CD8-positive, alpha-beta memory T cell (primary cell): ENCODE measurements at regions of chr1 and their contacts with region 1.

Region 1: GRCh38 chr1:226121587-226122400 is 59.3 kb downstream of the H3-3A start:
- DNase-seq: peak; percentile 70 to 85 (median 79)
- H3K4me3 ChIP-seq: peak overlapping the region; percentile 58
- H3K4me3 Mint-ChIP-seq: peak overlapping the region; percentile 65 to 94 (median 88)
- H3K27ac ChIP-seq: peak overlapping the region; percentile 54
- H3K27ac Mint-ChIP-seq: peak overlapping the region in 5 of 8 donors; percentile 73 to 98 (median 93)
- H3K4me1 ChIP-seq: peaks cover 25% of the 10 kb centered on the region
- H3K4me1 Mint-ChIP-seq: peaks cover 18 to 36% (median 26%) of the 10 kb centered on the region in 3 donors
- H3K27me3 ChIP-seq: no peaks in the 10 kb centered on the region
- H3K27me3 Mint-ChIP-seq: peaks cover 2 to 4% of the 10 kb centered on the region in 2 donors

Region 2: DNA sequence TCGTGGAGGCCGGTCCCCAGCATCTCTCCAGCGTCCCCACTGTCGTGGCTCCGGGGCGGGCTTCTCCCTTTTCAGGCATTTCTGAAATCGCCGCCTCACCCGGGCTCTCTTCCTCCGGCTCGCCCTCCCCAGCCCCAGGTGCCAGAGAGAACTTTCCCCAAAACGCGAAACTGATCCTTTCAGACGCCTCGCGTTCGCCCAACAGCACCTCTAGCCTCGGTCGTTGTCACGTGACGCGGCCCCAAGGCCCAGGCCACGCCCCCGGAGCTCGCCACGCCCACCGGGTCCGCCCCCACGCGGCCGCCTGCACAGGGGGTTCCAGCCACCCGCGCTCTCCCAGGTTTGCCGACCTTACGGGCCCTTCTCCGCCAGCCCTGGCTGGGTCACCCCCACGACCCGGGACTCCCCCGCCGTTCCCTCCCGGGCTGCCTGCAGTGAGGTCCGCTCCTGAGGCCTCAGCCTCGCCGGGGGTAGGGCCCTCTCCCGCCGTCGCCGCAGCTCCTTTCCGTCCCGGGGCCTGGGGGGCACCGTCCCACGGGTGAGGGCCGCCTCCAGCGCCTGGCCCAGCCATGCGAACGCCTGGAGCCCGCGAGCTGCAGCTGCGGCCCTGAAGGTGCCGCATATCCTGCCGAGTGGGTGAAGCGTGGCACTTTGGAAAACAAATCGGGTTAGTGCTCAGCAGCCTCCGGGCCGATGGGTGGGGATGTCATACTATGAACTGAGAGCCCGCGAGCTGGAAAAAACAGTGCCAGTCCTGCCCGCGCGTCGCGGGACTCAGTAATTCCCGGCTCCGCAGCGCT is 38.3 kb before region 1 on chr1:
- CTCF ChIA-PET with region 1: interaction called, 15 read pairs
- POLR2A ChIA-PET with region 1: interaction called, 3 read pairs
- DNase-seq: peak; percentile 84 to 93 (median 92)
- H3K4me3 ChIP-seq: peak overlapping the region; percentile 68
- H3K4me3 Mint-ChIP-seq: peak overlapping the region; percentile 80 to 95 (median 89)
- H3K27ac ChIP-seq: no peak overlapping the region
- H3K27ac Mint-ChIP-seq: peak overlapping the region in 5 of 8 donors; percentile 20 to 91 (median 40)
- H3K4me1 ChIP-seq: peaks cover 9% of the 10 kb centered on the region
- H3K4me1 Mint-ChIP-seq: peaks cover 7 to 12% (median 10%) of the 10 kb centered on the region in 3 donors
- H3K27me3 ChIP-seq: no peaks in the 10 kb centered on the region
- H3K27me3 Mint-ChIP-seq: no peaks in the 10 kb centered on the region

Region 3: DNA sequence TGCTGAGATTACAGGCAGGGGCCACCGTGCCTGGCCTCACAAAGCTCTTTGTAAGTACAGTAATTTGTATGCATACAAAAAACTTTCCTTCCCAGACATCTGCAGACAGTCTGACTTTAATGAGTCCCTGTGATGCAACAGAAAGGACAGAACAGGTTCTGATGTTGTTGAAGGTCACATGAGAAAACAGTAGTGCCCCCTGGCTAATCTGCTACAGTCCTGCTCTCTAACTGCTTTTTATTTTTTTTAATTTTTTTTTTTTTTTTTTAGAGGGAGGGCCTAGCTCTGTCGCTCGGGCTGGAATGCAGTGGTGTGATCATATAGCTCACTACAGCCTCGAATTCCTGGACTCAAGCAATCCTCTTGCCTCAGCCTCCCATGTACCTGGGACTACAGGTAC is 28.0 kb after region 1 on chr1:
- CTCF ChIA-PET with region 1: interaction called, 15 read pairs
- POLR2A ChIA-PET with region 1: no interaction called
- DNase-seq: no peak
- H3K4me3 ChIP-seq: no peak overlapping the region
- H3K4me3 Mint-ChIP-seq: no peak overlapping the region
- H3K27ac ChIP-seq: no peak overlapping the region
- H3K27ac Mint-ChIP-seq: peak overlapping the region in 1 of 8 donors; percentile 65
- H3K4me1 ChIP-seq: no peaks in the 10 kb centered on the region
- H3K4me1 Mint-ChIP-seq: peaks cover 0 to 3% (median 0%) of the 10 kb centered on the region in 3 donors
- H3K27me3 ChIP-seq: no peaks in the 10 kb centered on the region
- H3K27me3 Mint-ChIP-seq: no peaks in the 10 kb centered on the region

Region 4: GRCh38 chr1:226201029-226201593 is 79.3 kb after region 1 on chr1:
- CTCF ChIA-PET with region 1: interaction called, 149 read pairs
- POLR2A ChIA-PET with region 1: interaction called, 7 read pairs
- DNase-seq: no peak
- H3K4me3 ChIP-seq: no peak overlapping the region
- H3K4me3 Mint-ChIP-seq: no peak overlapping the region
- H3K27ac ChIP-seq: no peak overlapping the region
- H3K27ac Mint-ChIP-seq: no peak overlapping the region
- H3K4me1 ChIP-seq: no peaks in the 10 kb centered on the region
- H3K4me1 Mint-ChIP-seq: peaks cover 0 to 3% (median 0%) of the 10 kb centered on the region in 3 donors
- H3K27me3 ChIP-seq: no peaks in the 10 kb centered on the region
- H3K27me3 Mint-ChIP-seq: peaks cover 3 to 16% of the 10 kb centered on the region in 2 donors

Region 5: DNA sequence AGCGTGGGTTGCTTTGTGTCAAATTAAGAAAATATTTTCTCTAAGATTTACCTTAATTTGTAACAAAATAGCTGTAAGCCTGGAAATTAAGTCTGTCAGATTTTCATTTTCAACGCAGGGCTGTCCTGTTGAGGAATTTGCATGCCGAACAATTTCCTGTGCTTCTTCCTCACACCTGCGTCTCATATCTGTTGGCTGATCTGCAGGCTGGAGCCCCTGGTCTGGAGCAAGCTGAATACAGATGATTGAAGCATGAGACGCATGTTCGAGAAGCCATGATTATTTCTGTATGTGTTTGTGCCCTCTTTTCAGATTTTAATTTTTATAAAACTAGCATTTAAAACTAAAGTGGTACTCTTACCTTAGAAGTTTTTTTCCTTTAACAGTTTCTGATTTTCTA is 111.5 kb after region 1 on chr1:
- CTCF ChIA-PET with region 1: no interaction called
- POLR2A ChIA-PET with region 1: no interaction called
- DNase-seq: no peak
- H3K4me3 ChIP-seq: no peak overlapping the region
- H3K4me3 Mint-ChIP-seq: no peak overlapping the region
- H3K27ac ChIP-seq: no peak overlapping the region
- H3K27ac Mint-ChIP-seq: no peak overlapping the region
- H3K4me1 ChIP-seq: no peaks in the 10 kb centered on the region
- H3K4me1 Mint-ChIP-seq: no peaks in the 10 kb centered on the region
- H3K27me3 ChIP-seq: no peaks in the 10 kb centered on the region
- H3K27me3 Mint-ChIP-seq: no peaks in the 10 kb centered on the region

Region 6: GRCh38 chr1:226332947-226333346 is 211.2 kb after region 1 on chr1:
- CTCF ChIA-PET with region 1: interaction called, 45 read pairs
- POLR2A ChIA-PET with region 1: interaction called, 15 read pairs
- DNase-seq: no peak
- H3K4me3 ChIP-seq: no peak overlapping the region
- H3K4me3 Mint-ChIP-seq: peak overlapping the region in 5 of 7 donors; percentile 52 to 71 (median 63)
- H3K27ac ChIP-seq: no peak overlapping the region
- H3K27ac Mint-ChIP-seq: peak overlapping the region in 3 of 8 donors; percentile 7 to 81 (median 48)
- H3K4me1 ChIP-seq: no peaks in the 10 kb centered on the region
- H3K4me1 Mint-ChIP-seq: peaks cover 5 to 11% (median 7%) of the 10 kb centered on the region in 3 donors
- H3K27me3 ChIP-seq: no peaks in the 10 kb centered on the region
- H3K27me3 Mint-ChIP-seq: peaks cover 0 to 3% of the 10 kb centered on the region in 2 donors